Mammary epithelial cell (primary cell): ENCODE measurements at regions of chr2 and their contacts with region 1.

Region 1: GRCh38 chr2:176653479-176654443 is 384.5 kb downstream of the MTX2 start:
- DNase-seq: peak; percentile 67
- H3K4me3 ChIP-seq: no peak overlapping the region
- H3K27ac ChIP-seq: no peak overlapping the region
- H3K4me1 ChIP-seq: no peaks in the 10 kb centered on the region
- H3K27me3 ChIP-seq: peaks cover 3% of the 10 kb centered on the region
- CTCF ChIP-seq: peak; percentile 79 to 89

Region 2: DNA sequence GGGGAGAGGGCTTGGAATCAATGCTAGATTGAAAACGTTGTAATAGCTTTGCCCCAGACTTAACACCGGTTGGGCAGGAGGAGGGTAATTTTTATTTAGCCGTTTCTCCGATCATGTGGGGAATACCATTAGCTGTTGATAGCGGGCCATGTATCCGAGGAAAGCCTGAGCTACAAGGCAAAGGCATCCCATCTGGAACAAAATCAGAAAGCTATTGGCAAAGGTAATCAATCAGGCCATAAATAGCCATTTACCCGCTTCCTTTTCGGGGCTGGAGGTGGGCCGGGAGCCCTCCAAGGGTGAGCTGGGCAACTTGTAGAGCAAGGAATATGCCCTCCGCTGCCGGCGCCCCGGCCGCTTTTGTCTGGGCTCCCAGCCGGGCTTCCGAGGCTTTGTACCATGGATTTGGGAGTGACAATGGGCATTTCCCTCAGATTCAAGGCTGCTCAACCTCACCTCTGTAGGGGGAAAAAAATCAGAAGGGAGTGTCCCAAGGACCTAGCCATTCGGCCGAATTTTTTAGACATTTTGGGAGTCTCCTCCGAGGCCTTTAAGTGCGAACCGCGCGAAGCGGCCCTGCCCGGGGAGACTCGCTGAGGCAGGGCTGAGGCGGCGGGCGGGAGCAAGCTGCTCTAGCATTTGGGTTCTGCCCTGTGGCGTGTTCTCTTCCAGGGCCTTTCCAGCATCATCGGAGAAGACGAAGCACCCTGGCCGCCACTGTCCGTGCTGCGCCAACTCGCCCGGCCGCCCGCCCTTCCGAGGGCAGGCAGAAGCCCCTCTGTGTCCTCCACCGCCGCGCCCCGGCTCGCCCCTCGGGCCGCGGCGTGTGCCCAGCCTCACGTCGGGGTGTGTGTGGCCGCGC is 532.3 kb before region 1 on chr2:
- CTCF ChIA-PET with region 1: interaction called, 11 read pairs
- dilution Hi-C with region 1: no loop called
- in situ Hi-C with region 1: no loop called
- intact Hi-C with region 1: no loop called
- DNase-seq: no peak
- H3K4me3 ChIP-seq: no peak overlapping the region
- H3K27ac ChIP-seq: no peak overlapping the region
- H3K4me1 ChIP-seq: peaks cover 8% of the 10 kb centered on the region
- H3K27me3 ChIP-seq: peaks cover 89% of the 10 kb centered on the region
- CTCF ChIP-seq: no peak

Region 3: DNA sequence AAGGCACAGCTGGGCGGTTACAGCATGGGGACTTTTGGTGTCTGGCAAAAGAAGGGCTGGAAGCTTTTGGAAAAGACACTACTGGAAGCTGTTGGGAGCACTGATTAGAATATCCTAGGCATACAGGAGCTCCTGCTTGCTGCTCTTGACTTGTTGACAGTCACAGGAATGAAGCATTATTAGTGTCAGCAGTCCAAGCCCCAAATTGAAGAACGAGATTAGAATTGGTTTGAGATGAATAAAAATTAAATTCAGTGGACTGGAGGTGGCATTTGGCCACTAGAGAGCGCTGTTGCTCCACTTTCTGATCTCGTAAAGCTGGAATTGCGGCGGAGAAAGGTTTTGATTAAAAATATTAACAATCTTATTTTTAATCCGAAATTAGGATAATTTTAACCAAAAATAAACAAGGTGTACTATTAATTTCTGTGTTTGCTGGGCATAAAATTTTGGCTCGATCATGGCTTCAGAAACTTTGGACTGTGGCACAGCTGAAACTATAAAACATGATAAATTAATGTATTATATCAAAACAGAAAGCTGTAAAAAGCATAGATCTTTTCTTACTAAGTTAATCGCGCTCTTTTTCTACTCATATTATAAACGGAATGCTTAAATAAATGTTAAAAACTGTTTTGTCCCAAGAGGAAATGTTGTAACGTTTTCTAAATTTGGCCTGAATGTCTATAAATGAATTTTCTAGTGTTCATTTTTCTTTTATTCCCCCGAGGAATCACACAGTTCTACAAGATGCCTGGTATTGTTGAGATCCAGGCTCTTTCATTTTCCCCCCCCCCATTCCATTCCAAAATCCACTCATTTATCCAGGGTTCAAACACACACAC is 526.6 kb before region 1 on chr2:
- CTCF ChIA-PET with region 1: interaction called, 3 read pairs
- dilution Hi-C with region 1: no loop called
- in situ Hi-C with region 1: no loop called
- intact Hi-C with region 1: loop called (anchors 1 kb)
- DNase-seq: no peak
- H3K4me3 ChIP-seq: no peak overlapping the region
- H3K27ac ChIP-seq: no peak overlapping the region
- H3K4me1 ChIP-seq: peaks cover 8% of the 10 kb centered on the region
- H3K27me3 ChIP-seq: peaks cover 88% of the 10 kb centered on the region
- CTCF ChIP-seq: peak; percentile 74

Region 4: GRCh38 chr2:176814306-176815052 is 160.7 kb after region 1 on chr2:
- CTCF ChIA-PET with region 1: interaction called, 4 read pairs
- dilution Hi-C with region 1: no loop called
- in situ Hi-C with region 1: no loop called
- intact Hi-C with region 1: loop called (anchors 2 kb)
- DNase-seq: no peak
- H3K4me3 ChIP-seq: no peak overlapping the region
- H3K27ac ChIP-seq: no peak overlapping the region
- H3K4me1 ChIP-seq: no peaks in the 10 kb centered on the region
- H3K27me3 ChIP-seq: peaks cover 2% of the 10 kb centered on the region
- CTCF ChIP-seq: peak; percentile 39 to 53